ENCODE measurements at regions of chr14 and their contacts with region 1.

Region 1: GRCh38 chr14:50778721-50779483 is 52.1 kb downstream of the NIN start:
- DNase-seq: no peak
- H3K4me3 ChIP-seq: no peak overlapping the region
- H3K27ac ChIP-seq: no peak overlapping the region
- H3K4me1 ChIP-seq: peaks cover 0 to 3% (median 0%) of the 10 kb centered on the region in 4 experiments; a peak in 1 of 7 replicates
- H3K27me3 ChIP-seq: no peaks in the 10 kb centered on the region
- CTCF ChIP-seq: no peak
- EP300 ChIP-seq: no peak
- POLR2A ChIP-seq: no peak
- RAD21 ChIP-seq: no peak

Region 2: GRCh38 chr14:50545619-50546018 is 233.3 kb before region 1 on chr14:
- CTCF ChIA-PET with region 1: interaction called, 11 read pairs
- POLR2A ChIA-PET with region 1: no interaction called
- DNase-seq: no peak
- H3K4me3 ChIP-seq: no peak overlapping the region
- H3K27ac ChIP-seq: no peak overlapping the region
- H3K4me1 ChIP-seq: no peaks in the 10 kb centered on the region
- H3K27me3 ChIP-seq: no peaks in the 10 kb centered on the region
- CTCF ChIP-seq: no peak
- EP300 ChIP-seq: no peak
- POLR2A ChIP-seq: no peak
- RAD21 ChIP-seq: no peak

Region 3: DNA sequence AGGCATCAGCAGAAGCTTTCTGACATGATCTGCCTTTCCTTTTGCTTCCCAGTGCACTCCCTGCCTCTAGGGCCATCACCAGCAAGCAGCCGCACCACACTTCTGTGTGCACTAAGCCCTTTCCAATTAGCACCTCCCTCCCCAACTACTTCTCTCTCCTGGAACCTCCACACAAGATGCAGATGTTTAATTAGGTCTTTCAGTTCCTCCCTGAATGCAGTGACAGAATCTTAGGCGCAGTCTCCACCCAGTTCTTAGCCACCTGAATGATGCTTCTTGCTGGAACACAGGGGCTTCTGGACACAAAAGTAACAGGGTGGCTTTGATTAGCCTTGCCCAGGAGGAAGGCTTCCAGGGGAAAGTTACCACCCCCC is 19.1 kb after region 1 on chr14:
- CTCF ChIA-PET with region 1: interaction called, 20 read pairs
- POLR2A ChIA-PET with region 1: no interaction called
- DNase-seq: no peak
- H3K4me3 ChIP-seq: no peak overlapping the region
- H3K27ac ChIP-seq: no peak overlapping the region
- H3K4me1 ChIP-seq: no peaks in the 10 kb centered on the region
- H3K27me3 ChIP-seq: no peaks in the 10 kb centered on the region
- CTCF ChIP-seq: no peak
- EP300 ChIP-seq: no peak
- POLR2A ChIP-seq: no peak
- RAD21 ChIP-seq: no peak

Region 4: GRCh38 chr14:50892255-50892654 is 113.4 kb after region 1 on chr14:
- CTCF ChIA-PET with region 1: no interaction called
- POLR2A ChIA-PET with region 1: no interaction called
- DNase-seq: peak in 1 of 2 experiments; percentile 58
- H3K4me3 ChIP-seq: no peak overlapping the region
- H3K27ac ChIP-seq: no peak overlapping the region
- H3K4me1 ChIP-seq: peaks cover 0 to 6% (median 3%) of the 10 kb centered on the region in 4 experiments; a peak in 4 of 7 replicates
- H3K27me3 ChIP-seq: no peaks in the 10 kb centered on the region
- CTCF ChIP-seq: no peak
- EP300 ChIP-seq: no peak
- POLR2A ChIP-seq: no peak
- RAD21 ChIP-seq: no peak

Measured in H1 (cell line).